Mucosa of descending colon (tissue), 3 donors: ENCODE measurements at regions of chr6 and their contacts with region 1.

Region 1: GRCh38 chr6:109094363-109095026 is at the start of gene SESN1:
- DNase-seq: peak; percentile 92 to 96 (median 95)
- ATAC-seq: peak; percentile 88
- H3K4me3 ChIP-seq: peak within 1 kb of the TSS; percentile 38
- H3K4me1 ChIP-seq: peaks cover 22% of the 10 kb centered on the region
- CTCF ChIP-seq: no peak
- total RNA-seq, gene SESN1: 23.5 to 42.6 (median 32.8) TPM

Region 2: GRCh38 chr6:109389650-109390274 is 295.3 kb after region 1 on chr6:
- intact Hi-C with region 1: loop called in 1 of 2 experiments (anchors 5 kb)
- DNase-seq: no peak
- ATAC-seq: no peak
- H3K4me3 ChIP-seq: no peak overlapping the region
- H3K4me1 ChIP-seq: peaks cover 3% of the 10 kb centered on the region
- CTCF ChIP-seq: no peak

Region 3: GRCh38 chr6:110618591-110619267 is 1524.2 kb after region 1 on chr6:
- intact Hi-C with region 1: no loop called
- DNase-seq: peak in 1 of 3 donors; percentile 9
- ATAC-seq: peak; percentile 67
- H3K4me3 ChIP-seq: no peak overlapping the region
- H3K4me1 ChIP-seq: peaks cover 15% of the 10 kb centered on the region
- CTCF ChIP-seq: no peak